ENCODE measurements at regions of chr20 and their contacts with region 1.

Region 1: DNA sequence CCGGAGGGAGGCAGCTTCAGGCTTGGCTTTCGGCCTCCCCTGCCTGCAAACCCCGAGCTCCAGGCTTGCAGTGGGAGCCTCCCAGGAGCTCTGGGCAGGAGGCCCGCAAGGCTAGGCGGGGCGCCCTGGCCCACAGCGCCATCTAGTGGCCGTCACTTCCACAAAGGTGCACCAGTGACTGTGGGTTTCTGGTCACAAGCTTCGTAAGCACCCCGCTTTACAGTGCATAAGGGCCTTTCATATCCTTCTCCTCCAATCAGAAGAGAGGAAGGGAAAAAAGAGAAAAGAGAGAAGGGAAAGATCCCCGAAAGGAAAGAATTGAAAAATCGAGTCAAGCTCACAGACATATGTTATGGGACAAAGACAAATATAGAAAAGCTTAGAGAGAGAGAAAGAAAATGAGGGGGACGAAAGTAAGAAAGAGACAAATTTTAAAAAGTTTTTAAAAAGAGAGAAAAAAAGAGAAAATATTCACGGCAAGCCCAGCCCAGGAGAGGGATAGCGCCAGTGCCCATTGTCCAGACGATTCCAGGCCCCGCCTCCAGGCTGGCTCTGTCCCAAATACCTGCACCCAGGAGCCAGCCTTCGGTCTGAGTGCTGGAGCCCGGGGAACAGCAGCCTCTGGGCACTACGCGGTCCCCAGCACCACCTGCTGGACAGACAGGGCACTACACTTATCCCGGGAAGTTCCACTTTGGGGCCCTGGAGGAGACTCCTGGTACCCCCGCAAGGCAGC is 207.1 kb downstream of the PREX1 start:
- DNase-seq: peak; percentile 80
- H3K4me3 ChIP-seq: peak overlapping the region; percentile 31 to 40 (median 32)
- H3K27ac ChIP-seq: peak overlapping the region; percentile 62
- H3K4me1 ChIP-seq: peaks cover 23% of the 10 kb centered on the region
- H3K27me3 ChIP-seq: no peaks in the 10 kb centered on the region
- CTCF ChIP-seq: peak; percentile 90 to 98

Region 2: GRCh38 chr20:47272893-47273590 is 1347.6 kb before region 1 on chr20:
- CTCF ChIA-PET with region 1: no interaction called
- dilution Hi-C with region 1: no loop called
- in situ Hi-C with region 1: no loop called
- intact Hi-C with region 1: loop called (anchors 2 kb)
- DNase-seq: peak; percentile 60
- H3K4me3 ChIP-seq: no peak overlapping the region
- H3K27ac ChIP-seq: peak overlapping the region; percentile 94
- H3K4me1 ChIP-seq: peaks cover 39% of the 10 kb centered on the region
- H3K27me3 ChIP-seq: no peaks in the 10 kb centered on the region
- CTCF ChIP-seq: peak; percentile 88 to 93

Region 3: DNA sequence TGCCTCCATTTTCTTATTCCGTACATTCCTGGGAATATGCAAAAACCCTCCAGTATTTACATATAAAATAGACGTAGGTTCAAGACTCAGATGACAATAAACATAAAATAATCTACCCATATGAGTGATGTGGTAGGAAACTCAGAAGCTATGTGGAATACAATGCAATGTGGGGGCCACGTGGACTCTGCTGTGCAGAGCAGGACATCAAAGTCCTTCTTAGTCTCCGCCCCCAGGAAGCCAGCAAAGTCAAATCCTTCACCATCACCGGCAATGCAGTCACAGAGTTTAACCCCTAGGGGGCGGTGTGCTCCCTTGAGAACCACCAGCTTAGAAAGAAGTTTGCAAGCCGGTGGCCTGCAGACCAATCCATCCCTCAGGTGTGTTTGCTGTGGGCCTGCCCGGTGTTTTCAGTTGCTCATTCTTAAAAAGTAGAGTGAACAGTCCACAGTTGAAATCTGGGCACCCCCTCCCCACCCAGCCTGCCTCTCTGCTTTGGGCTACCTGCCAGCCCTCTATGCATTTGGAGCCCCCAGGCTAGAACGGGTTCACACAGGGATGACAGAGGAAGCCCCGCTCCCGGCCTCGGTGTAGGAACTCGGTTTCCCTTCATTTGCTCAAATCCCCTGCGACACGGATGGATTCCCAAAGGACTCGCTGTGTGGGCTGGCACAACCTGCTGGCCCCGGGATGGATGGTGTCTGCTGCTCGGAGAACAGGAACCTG is 895.3 kb before region 1 on chr20:
- CTCF ChIA-PET with region 1: no interaction called
- dilution Hi-C with region 1: no loop called
- in situ Hi-C with region 1: no loop called
- intact Hi-C with region 1: loop called (anchors 1 kb)
- DNase-seq: peak; percentile 76
- H3K4me3 ChIP-seq: no peak overlapping the region
- H3K27ac ChIP-seq: no peak overlapping the region
- H3K4me1 ChIP-seq: no peaks in the 10 kb centered on the region
- H3K27me3 ChIP-seq: no peaks in the 10 kb centered on the region
- CTCF ChIP-seq: peak; percentile 92 to 95

Region 4: DNA sequence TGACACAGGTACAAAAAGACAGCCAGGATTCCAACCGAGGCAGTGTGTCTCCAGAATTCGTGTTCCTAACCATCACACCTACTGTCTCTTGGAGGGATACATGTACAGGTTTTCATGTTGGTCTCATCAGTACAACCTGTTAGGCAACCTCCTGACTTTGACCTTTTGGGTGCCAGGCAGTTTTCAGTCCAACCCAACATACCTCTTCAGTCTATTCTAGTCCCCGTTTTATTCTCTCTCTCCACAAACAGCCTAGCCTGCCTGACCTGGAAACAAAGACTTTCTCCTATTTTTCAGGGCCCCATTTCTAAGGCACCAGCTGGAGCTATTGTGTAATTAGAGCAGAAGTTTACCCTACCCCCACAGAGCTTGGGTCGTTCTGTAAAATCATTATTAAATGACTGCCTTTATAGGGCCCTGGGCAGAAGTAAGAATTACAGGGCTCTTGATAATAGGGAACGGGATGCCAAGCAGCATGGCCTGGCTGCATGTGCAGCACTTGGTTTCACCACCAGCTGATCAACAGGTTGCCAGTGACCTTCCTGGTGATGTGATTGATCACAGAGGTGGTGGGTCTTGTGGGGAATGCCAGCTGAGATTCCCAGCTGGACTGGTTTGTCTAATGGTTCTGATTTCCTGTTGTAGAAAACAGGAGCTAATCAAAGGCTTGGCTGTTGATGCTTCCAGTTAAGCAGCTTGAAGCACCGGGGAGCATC is 507.7 kb before region 1 on chr20:
- CTCF ChIA-PET with region 1: no interaction called
- dilution Hi-C with region 1: no loop called
- in situ Hi-C with region 1: no loop called
- intact Hi-C with region 1: no loop called
- DNase-seq: no peak
- H3K4me3 ChIP-seq: no peak overlapping the region
- H3K27ac ChIP-seq: no peak overlapping the region
- H3K4me1 ChIP-seq: no peaks in the 10 kb centered on the region
- H3K27me3 ChIP-seq: peaks cover 3% of the 10 kb centered on the region
- CTCF ChIP-seq: no peak

Region 5: GRCh38 chr20:48188657-48189551 is 431.8 kb before region 1 on chr20:
- CTCF ChIA-PET with region 1: no interaction called
- dilution Hi-C with region 1: no loop called
- in situ Hi-C with region 1: loop called in 1 of 2 experiments (anchors 25 kb)
- intact Hi-C with region 1: loop called (anchors 1 kb)
- DNase-seq: peak; percentile 83
- H3K4me3 ChIP-seq: no peak overlapping the region
- H3K27ac ChIP-seq: no peak overlapping the region
- H3K4me1 ChIP-seq: peaks cover 31% of the 10 kb centered on the region
- H3K27me3 ChIP-seq: no peaks in the 10 kb centered on the region
- CTCF ChIP-seq: peak; percentile 57 to 81

Region 6: GRCh38 chr20:48310305-48310704 is 310.4 kb before region 1 on chr20:
- CTCF ChIA-PET with region 1: no interaction called
- dilution Hi-C with region 1: loop called (anchors 5 kb)
- in situ Hi-C with region 1: no loop called
- intact Hi-C with region 1: no loop called
- DNase-seq: no peak
- H3K4me3 ChIP-seq: no peak overlapping the region
- H3K27ac ChIP-seq: no peak overlapping the region
- H3K4me1 ChIP-seq: no peaks in the 10 kb centered on the region
- H3K27me3 ChIP-seq: no peaks in the 10 kb centered on the region
- CTCF ChIP-seq: no peak

Region 7: DNA sequence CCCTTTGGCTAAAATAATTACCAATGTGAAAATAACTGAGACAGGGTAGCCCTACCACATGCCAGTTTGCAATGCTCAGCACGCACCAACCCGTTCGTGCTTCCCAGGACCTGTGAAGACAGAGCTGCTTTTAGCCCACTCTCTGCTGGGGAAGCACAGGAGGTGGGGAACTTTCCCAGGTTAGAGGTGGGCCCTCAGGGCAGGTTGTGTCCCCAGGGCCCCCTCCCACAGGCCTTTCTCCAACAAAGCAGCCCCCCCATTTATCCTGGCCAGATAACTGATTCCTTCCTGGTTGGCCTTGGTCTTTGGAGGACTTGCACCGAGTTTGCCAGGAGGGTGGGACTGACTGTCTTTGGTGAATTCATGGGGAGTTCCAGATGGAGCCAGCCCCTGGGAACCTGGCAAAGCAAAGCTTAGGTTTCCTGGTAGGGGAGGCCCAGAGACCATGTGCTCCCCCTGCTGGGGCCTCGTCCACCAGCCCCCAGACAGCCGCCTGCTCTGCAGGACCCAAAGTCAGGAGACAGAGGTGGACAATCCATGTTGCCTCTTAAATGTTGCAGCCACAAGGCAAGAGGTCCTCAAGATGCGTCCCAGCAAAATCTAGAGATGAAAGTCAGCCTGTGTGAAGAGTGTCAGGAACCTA is 290.9 kb before region 1 on chr20:
- CTCF ChIA-PET with region 1: no interaction called
- dilution Hi-C with region 1: no loop called
- in situ Hi-C with region 1: no loop called
- intact Hi-C with region 1: no loop called
- DNase-seq: no peak
- H3K4me3 ChIP-seq: no peak overlapping the region
- H3K27ac ChIP-seq: no peak overlapping the region
- H3K4me1 ChIP-seq: no peaks in the 10 kb centered on the region
- H3K27me3 ChIP-seq: peaks cover 9% of the 10 kb centered on the region
- CTCF ChIP-seq: no peak

Region 8: DNA sequence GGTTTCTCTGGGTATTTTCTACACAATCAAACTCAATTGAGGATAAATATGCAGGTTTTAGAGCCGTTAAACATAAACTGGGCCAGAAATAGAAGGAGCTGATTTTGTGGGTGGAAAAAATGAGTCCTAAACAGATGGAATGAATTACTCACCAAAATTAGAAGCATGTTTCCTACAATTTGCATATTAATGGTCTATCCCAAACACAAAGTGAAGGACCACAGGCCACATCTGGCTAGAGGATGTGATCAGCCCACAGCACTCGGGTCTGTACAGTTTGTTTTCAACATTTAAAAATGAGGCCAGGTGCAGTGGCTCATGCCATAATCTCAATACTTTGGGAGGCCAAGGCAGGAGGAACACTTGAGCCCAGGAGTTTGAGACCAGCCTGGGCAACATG is 89.2 kb before region 1 on chr20:
- CTCF ChIA-PET with region 1: no interaction called
- dilution Hi-C with region 1: loop called (anchors 5 kb)
- in situ Hi-C with region 1: no loop called
- intact Hi-C with region 1: no loop called
- DNase-seq: no peak
- H3K4me3 ChIP-seq: no peak overlapping the region
- H3K27ac ChIP-seq: no peak overlapping the region
- H3K4me1 ChIP-seq: no peaks in the 10 kb centered on the region
- H3K27me3 ChIP-seq: no peaks in the 10 kb centered on the region
- CTCF ChIP-seq: no peak

Measured in mammary epithelial cell (primary cell).